ENCODE measurements at regions of chr6 and their contacts with region 1.

Region 1: GRCh38 chr6:102986086-102986485 is 1592.6 kb downstream of the GRIK2 start:
- DNase-seq: no peak
- H3K4me3 ChIP-seq: no peak overlapping the region
- H3K4me3 Mint-ChIP-seq: no peak overlapping the region
- H3K27ac Mint-ChIP-seq: peak overlapping the region; percentile 26
- H3K4me1 ChIP-seq: peaks cover 21% of the 10 kb centered on the region
- H3K4me1 Mint-ChIP-seq: peaks cover 19% of the 10 kb centered on the region
- H3K27me3 ChIP-seq: no peaks in the 10 kb centered on the region
- H3K27me3 Mint-ChIP-seq: no peaks in the 10 kb centered on the region
- CTCF ChIP-seq: no peak

Region 2: GRCh38 chr6:102794962-102795361 is 191.1 kb before region 1 on chr6:
- CTCF ChIA-PET with region 1: no interaction called
- POLR2A ChIA-PET with region 1: no interaction called
- intact Hi-C with region 1: loop called (anchors 1 kb)
- DNase-seq: peak in 1 of 2 experiments; percentile 17
- H3K4me3 ChIP-seq: no peak overlapping the region
- H3K4me3 Mint-ChIP-seq: no peak overlapping the region
- H3K27ac Mint-ChIP-seq: no peak overlapping the region
- H3K4me1 ChIP-seq: peaks cover 9% of the 10 kb centered on the region
- H3K4me1 Mint-ChIP-seq: peaks cover 13% of the 10 kb centered on the region
- H3K27me3 ChIP-seq: no peaks in the 10 kb centered on the region
- H3K27me3 Mint-ChIP-seq: no peaks in the 10 kb centered on the region
- CTCF ChIP-seq: no peak

Region 3: DNA sequence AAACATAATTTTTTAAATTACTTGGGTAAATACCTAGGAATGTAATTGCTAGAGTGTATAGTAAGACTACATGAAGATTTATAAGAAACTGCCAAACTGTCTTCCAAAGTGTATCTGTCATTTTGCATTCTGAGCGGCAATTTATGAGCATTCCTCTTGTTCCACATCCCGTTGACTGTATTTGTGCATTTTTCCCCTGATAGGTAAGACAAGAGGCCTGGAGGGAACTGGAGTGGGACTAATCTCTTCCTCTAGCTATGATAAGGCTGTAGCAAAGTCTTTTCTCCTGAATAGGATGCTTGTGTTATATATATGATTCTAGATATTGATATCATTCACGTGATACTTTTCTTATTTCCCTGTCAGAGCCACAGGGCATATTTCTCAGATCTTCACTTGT is 35.1 kb before region 1 on chr6:
- CTCF ChIA-PET with region 1: no interaction called
- POLR2A ChIA-PET with region 1: no interaction called
- intact Hi-C with region 1: loop called (anchors 1 kb)
- DNase-seq: no peak
- H3K4me3 ChIP-seq: no peak overlapping the region
- H3K4me3 Mint-ChIP-seq: no peak overlapping the region
- H3K27ac Mint-ChIP-seq: no peak overlapping the region
- H3K4me1 ChIP-seq: peaks cover 42% of the 10 kb centered on the region
- H3K4me1 Mint-ChIP-seq: peaks cover 18% of the 10 kb centered on the region
- H3K27me3 ChIP-seq: no peaks in the 10 kb centered on the region
- H3K27me3 Mint-ChIP-seq: no peaks in the 10 kb centered on the region
- CTCF ChIP-seq: no peak

Region 4: DNA sequence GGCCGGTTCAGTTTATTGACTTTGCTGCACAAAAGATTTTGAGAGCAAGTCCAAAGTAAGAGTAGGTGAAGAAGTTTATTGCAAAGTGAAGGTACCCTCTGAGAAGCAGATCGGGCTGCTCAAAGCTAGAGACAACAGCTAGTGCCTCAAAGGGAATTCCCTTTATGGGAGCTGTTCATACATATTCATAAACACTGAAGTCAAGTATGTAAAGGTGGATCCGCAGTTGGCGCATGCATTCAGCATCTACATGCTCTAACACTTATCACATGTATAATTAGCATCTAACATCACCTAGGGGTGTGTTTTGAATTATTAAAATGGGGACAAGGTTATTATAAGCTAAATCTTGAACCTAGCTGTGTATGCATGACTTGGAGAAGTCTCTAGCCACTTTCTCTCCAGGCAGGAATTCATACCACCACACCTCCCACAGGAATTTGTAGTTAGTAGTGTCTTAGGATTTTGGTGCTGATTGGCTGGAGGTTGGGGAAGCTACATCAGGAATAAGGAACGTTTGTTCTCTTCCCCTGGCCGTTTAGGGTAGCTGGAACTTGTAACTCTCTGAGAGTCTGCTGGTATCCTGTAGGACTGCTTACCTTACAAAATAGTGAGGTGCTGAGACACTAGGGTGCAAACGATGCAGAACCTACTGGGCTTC is 41.3 kb after region 1 on chr6:
- CTCF ChIA-PET with region 1: no interaction called
- POLR2A ChIA-PET with region 1: no interaction called
- intact Hi-C with region 1: no loop called
- DNase-seq: no peak
- H3K4me3 ChIP-seq: no peak overlapping the region
- H3K4me3 Mint-ChIP-seq: no peak overlapping the region
- H3K27ac Mint-ChIP-seq: no peak overlapping the region
- H3K4me1 ChIP-seq: no peaks in the 10 kb centered on the region
- H3K4me1 Mint-ChIP-seq: peaks cover 6% of the 10 kb centered on the region
- H3K27me3 ChIP-seq: no peaks in the 10 kb centered on the region
- H3K27me3 Mint-ChIP-seq: no peaks in the 10 kb centered on the region
- CTCF ChIP-seq: no peak

Region 5: DNA sequence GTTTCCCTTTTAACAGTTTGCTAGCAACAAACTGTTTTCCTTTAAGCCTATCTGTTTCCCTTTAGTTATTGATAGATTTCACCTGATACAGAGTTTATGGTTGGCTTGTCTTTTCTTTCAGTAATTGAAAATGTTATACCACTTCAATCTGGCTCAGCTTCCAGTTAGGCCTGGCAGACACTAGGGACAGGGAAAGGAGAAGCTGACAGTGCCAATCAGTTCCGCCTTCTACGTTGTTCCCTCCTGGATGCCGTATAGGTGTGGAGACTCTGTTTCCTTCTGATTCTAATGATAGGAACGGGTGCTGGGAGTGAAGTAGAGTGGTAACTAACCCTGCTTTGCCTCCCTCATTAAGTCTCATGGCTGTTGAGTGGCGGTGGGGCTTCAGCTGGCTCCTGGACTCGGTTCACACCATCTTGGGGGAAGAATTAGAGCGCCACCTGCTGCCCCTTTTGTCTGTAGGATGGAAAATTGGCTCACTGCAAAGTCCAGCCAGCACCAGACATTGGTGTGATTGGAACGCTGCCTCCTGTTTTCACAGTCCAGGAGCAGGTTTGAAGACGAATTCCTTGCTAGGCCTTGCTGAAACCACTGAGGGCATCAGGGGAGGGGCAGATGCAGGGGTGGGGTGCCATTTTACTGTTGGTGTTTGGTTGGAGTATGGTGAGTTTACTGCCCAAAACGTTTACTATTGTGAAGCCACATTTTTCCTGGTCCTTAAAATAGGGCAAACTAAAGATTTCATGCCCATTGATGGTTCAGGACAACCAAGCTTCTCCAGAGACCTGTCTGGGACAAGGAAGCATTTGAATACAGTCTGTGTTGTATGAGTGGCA is 136.9 kb after region 1 on chr6:
- CTCF ChIA-PET with region 1: no interaction called
- POLR2A ChIA-PET with region 1: no interaction called
- intact Hi-C with region 1: loop called (anchors 10 kb)
- DNase-seq: peak; percentile 78 to 79
- H3K4me3 ChIP-seq: no peak overlapping the region
- H3K4me3 Mint-ChIP-seq: no peak overlapping the region
- H3K27ac Mint-ChIP-seq: no peak overlapping the region
- H3K4me1 ChIP-seq: no peaks in the 10 kb centered on the region
- H3K4me1 Mint-ChIP-seq: no peaks in the 10 kb centered on the region
- H3K27me3 ChIP-seq: no peaks in the 10 kb centered on the region
- H3K27me3 Mint-ChIP-seq: no peaks in the 10 kb centered on the region
- CTCF ChIP-seq: peak; percentile 40 to 68

Measured in Caco-2 (cell line).